ENCODE measurements at regions of chr16 and their contacts with region 1.

Region 1: GRCh38 chr16:50814541-50814940 is 72.7 kb downstream of the CYLD start:
- DNase-seq: no peak
- H3K4me3 ChIP-seq: no peak overlapping the region
- H3K27ac ChIP-seq: no peak overlapping the region
- H3K4me1 ChIP-seq: no peaks in the 10 kb centered on the region
- H3K27me3 ChIP-seq: peaks cover 0 to 4% (median 0%) of the 10 kb centered on the region in 3 donors
- CTCF ChIP-seq: no peak
- EP300 ChIP-seq: no peak
- POLR2A ChIP-seq: no peak

Region 2: GRCh38 chr16:50879873-50880695 is 65.5 kb after region 1 on chr16:
- intact Hi-C with region 1: loop called (anchors 10 kb)
- DNase-seq: peak in 1 of 2 donors; percentile 25
- H3K4me3 ChIP-seq: no peak overlapping the region
- H3K27ac ChIP-seq: no peak overlapping the region
- H3K4me1 ChIP-seq: no peaks in the 10 kb centered on the region
- H3K27me3 ChIP-seq: peaks cover 0 to 26% (median 11%) of the 10 kb centered on the region in 3 donors
- CTCF ChIP-seq: no peak
- EP300 ChIP-seq: no peak
- POLR2A ChIP-seq: no peak

Region 3: GRCh38 chr16:50977138-50977537 is 162.6 kb after region 1 on chr16:
- intact Hi-C with region 1: no loop called
- DNase-seq: peak in 1 of 2 donors; percentile 13
- H3K4me3 ChIP-seq: no peak overlapping the region
- H3K27ac ChIP-seq: no peak overlapping the region
- H3K4me1 ChIP-seq: no peaks in the 10 kb centered on the region
- H3K27me3 ChIP-seq: peaks cover 0 to 11% (median 0%) of the 10 kb centered on the region in 3 donors
- CTCF ChIP-seq: no peak
- EP300 ChIP-seq: no peak
- POLR2A ChIP-seq: no peak

Region 4: GRCh38 chr16:51048544-51048943 is 234.0 kb after region 1 on chr16:
- intact Hi-C with region 1: no loop called
- DNase-seq: no peak
- H3K4me3 ChIP-seq: no peak overlapping the region
- H3K27ac ChIP-seq: no peak overlapping the region
- H3K4me1 ChIP-seq: no peaks in the 10 kb centered on the region
- H3K27me3 ChIP-seq: peaks cover 0 to 5% (median 0%) of the 10 kb centered on the region in 3 donors
- CTCF ChIP-seq: no peak
- EP300 ChIP-seq: no peak
- POLR2A ChIP-seq: no peak

Region 5: DNA sequence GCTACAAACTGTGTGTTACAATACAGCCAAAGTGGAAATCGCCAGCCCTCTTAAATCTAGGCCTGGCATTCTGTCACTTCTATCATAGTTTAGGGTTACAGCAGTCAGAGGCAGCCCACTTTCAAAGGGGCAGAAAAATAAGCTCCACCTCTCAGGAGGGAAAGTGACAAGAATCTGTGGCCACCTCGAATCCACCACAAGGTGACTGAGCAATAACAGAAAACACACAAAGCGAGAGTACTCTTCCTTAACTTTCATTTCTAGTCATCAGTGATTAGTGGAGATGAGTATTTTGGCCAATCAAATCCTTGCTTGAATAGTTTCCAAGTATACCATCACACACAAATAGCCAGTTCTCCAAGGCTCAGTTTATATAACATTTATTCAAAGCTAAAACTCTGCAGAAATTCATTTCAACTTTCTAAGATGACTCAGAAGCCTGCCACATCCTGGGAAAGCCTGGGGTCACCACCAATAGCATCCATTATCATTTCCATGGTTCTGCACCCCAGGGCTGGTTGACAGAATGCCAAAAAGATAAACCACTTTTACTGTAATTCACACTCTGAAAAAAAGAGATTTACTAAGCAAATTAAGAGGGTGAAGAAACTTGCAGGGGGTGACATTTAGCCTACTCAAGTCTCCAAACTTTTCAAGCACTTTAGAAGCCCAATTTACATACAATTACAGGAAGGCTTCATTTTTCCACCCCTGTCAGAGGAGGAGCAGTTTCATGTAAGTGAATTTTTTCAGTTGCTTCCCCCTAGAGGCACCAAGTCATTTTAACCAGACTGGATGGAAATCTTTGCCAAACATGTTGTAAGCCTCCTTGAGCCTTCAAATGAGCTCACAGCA is 269.8 kb after region 1 on chr16:
- intact Hi-C with region 1: no loop called
- DNase-seq: no peak
- H3K4me3 ChIP-seq: no peak overlapping the region
- H3K27ac ChIP-seq: no peak overlapping the region
- H3K4me1 ChIP-seq: no peaks in the 10 kb centered on the region
- H3K27me3 ChIP-seq: no peaks in the 10 kb centered on the region
- CTCF ChIP-seq: no peak
- EP300 ChIP-seq: no peak
- POLR2A ChIP-seq: no peak

Measured in stomach (tissue), 19 donors.